BJ (cell line): ENCODE measurements at regions of chr15 and their contacts with region 1.

Region 1: GRCh38 chr15:40838776-40839175 is 5.1 kb upstream of the SPINT1 start:
- DNase-seq: no peak
- H3K4me3 ChIP-seq: no peak overlapping the region
- H3K27me3 ChIP-seq: peaks cover 7% of the 10 kb centered on the region
- CTCF ChIP-seq: no peak

Region 2: GRCh38 chr15:40684381-40684780 is 154.4 kb before region 1 on chr15:
- CTCF ChIA-PET with region 1: no interaction called
- POLR2A ChIA-PET with region 1: no interaction called
- DNase-seq: no peak
- H3K4me3 ChIP-seq: no peak overlapping the region
- H3K27me3 ChIP-seq: no peaks in the 10 kb centered on the region
- CTCF ChIP-seq: no peak

Region 3: DNA sequence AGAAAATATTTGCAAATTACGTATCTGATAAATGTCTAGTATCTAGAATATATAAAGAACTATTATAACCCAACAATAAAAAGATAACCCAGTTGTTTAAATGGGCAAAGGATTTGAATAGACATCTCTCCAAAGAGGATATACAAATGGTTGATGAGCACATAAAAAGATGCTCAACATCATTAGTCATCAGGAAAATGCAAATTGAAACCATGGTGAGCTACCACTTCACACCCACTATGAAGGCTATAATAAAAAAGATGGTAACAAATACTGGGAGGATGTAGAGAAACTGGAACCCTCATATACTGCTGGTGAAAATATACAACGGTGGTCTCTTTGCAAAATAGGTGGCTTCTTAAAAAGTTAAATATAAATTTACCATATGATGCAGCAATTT is 115.8 kb before region 1 on chr15:
- CTCF ChIA-PET with region 1: no interaction called
- POLR2A ChIA-PET with region 1: no interaction called
- DNase-seq: no peak
- H3K4me3 ChIP-seq: no peak overlapping the region
- H3K27me3 ChIP-seq: no peaks in the 10 kb centered on the region
- CTCF ChIP-seq: no peak

Region 4: DNA sequence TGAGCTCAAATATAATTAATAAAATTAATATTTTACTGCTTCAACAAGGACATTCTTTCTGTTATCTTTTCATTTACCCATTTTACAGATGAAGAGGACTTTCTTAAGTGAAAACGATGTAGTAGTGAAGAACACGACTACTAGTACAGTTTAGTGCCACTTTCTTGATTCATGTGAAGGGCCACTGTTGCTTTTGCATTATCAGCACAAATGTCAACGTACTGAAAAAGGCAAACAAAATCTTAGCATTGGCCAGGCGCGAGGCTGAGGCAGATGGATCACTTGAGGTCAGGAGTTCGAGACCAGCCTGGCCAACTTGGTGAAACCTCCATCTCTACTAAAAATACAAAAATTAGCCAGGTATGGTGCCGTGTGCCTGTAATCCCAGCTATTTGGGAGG is 19.7 kb before region 1 on chr15:
- CTCF ChIA-PET with region 1: no interaction called
- POLR2A ChIA-PET with region 1: no interaction called
- DNase-seq: no peak
- H3K4me3 ChIP-seq: no peak overlapping the region
- H3K27me3 ChIP-seq: peaks cover 2% of the 10 kb centered on the region; the same call in 1 of the 2 replicates
- CTCF ChIP-seq: no peak

Region 5: DNA sequence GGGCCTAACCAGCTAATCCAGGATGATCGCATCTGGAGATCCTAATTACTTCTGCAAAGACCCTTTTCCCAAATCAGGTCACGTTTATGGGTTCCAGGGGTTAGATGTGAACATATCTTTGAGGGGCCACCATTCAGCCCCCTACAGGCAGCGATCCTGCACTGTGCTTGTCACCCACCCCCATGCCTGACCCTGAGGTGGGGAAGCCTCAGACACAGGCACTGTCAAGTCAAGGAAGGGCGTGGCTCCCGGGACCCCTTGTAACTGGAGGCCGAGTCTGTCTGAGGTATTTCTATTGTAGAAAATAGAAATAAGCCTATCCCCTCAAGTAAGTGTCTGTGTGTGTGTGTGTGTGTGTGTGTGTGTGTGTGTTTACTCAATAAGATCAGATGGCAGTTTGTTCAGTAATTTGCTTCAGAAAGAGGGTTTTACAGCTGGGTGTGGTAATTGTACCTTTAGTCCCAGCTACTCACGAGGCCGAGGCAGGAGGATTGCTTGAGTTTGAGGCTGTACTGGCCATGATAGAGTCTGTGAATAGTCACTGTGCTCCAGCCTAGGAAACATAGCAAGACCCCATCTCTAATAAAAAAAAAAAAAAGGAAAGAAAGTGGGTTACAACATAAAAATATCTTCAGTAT is 13.6 kb after region 1 on chr15:
- CTCF ChIA-PET with region 1: interaction called, 81 read pairs
- POLR2A ChIA-PET with region 1: no interaction called
- DNase-seq: no peak
- H3K4me3 ChIP-seq: no peak overlapping the region
- H3K27me3 ChIP-seq: 0 out of 2 replicates have a peak, but pooled peaks cover 1% of the 10 kb centered on the region
- CTCF ChIP-seq: no peak